ENCODE measurements at regions of chr9 and their contacts with region 1.

Region 1: GRCh38 chr9:15211160-15211814 is 95.7 kb downstream of the TTC39B start:
- DNase-seq: peak; percentile 54
- CTCF ChIP-seq: peak; percentile 77

Region 2: DNA sequence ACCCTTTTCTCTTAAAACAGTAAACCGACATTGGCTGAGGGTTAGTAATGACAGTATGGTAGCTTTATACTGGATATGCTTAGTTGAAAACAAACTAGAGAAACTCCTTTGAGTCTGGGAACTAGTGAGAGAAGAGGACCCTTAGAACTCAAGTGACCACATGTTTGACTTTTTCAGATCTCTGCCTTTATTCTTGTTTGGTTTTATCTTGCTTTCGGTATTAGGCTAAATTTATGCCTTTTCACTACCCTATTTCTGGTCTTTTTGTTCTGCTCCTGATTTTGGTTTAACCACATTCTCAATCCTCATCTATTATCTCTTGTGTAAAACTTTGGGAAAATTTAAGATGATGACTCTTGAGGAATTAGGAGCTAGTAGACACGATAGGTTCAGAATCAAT is 222.4 kb after region 1 on chr9:
- in situ Hi-C with region 1: no loop called
- DNase-seq: peak; percentile 49
- CTCF ChIP-seq: no peak

Region 3: GRCh38 chr9:15606643-15607472 is 395.6 kb after region 1 on chr9:
- in situ Hi-C with region 1: loop called (anchors 25 kb)
- DNase-seq: peak; percentile 54
- CTCF ChIP-seq: peak; percentile 47